Sigmoid colon (tissue), 7 donors: ENCODE measurements at regions of chr3 and their contacts with region 1.

Region 1: DNA sequence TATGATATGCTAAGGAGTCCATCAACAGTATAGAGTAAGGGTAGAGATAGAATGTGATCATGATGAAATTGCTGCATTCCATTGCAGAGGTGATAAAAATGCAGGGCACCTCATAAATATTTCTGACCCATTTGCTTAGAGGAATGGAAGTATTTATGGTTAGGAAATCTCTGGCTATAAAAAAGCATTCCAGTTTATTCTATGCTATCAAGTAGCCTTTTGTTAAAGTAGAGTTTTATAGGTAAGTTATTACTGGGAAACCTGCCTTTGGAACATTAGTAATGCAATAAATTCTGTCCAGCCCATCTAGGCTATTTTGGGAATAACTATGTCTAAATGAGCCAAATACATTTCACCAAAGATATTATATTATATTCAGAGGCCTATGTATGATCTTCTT is 19.8 kb upstream of the STRIT1 start:
- DNase-seq: no peak
- H3K4me3 ChIP-seq: no peak overlapping the region
- H3K27ac ChIP-seq: no peak overlapping the region
- H3K4me1 ChIP-seq: peaks cover 0 to 13% (median 6%) of the 10 kb centered on the region in 4 donors
- H3K27me3 ChIP-seq: no peaks in the 10 kb centered on the region
- CTCF ChIP-seq: no peak
- EP300 ChIP-seq: no peak
- POLR2A ChIP-seq: no peak

Region 2: DNA sequence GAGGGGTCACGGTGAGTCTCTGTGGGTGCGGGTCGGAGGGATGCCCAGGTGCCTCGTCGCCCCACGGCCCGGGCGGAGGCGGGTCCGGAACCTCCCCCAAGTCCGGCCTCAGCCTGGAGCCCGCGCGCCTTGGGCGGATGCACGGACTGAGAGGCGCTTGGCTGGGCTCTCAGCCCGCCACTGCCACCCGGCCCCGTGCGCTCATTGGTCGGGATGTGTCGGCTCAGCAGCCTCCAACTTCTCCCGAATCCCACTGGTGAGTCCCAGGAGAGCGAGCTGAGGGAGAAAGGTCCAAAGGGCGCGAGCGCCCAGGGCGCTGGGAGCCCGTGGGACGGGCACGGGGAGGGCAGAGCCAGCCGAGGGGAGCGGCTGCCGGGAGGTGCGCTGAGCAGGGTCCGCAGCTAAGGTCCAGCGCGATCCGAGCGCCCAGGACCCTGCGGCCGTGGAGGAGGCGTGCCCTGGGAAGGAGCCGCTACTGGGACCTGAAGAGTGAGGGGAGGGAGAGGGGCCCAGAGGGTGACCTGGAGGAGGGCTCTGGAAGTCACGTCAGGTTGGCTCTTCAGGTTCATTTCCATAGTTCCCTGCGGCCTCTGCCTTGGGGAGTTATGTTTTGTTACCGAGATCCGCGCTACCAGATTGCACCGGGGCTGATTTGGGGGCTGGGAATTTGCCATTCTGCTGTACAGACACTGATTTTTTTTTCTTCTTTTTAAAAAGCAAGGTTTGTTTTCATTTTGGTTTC is 233.4 kb before region 1 on chr3 and contains the start of gene MME:
- intact Hi-C with region 1: loop called (anchors 5 kb)
- DNase-seq: no peak
- H3K4me3 ChIP-seq: peak within 1 kb of the TSS; percentile 3 to 51 (median 42)
- H3K27ac ChIP-seq: no peak within 1 kb of the TSS
- H3K4me1 ChIP-seq: peaks cover 0 to 21% (median 17%) of the 10 kb centered on the region in 4 donors
- H3K27me3 ChIP-seq: peaks cover 13 to 68% (median 30%) of the 10 kb centered on the region in 3 donors
- CTCF ChIP-seq: no peak
- EP300 ChIP-seq: no peak
- POLR2A ChIP-seq: no peak
- total RNA-seq, gene MME: 0.49 to 5.0 (median 2.8) TPM